Sigmoid colon (tissue), 7 donors: ENCODE measurements at regions of chr15 and their contacts with region 1.

Region 1: DNA sequence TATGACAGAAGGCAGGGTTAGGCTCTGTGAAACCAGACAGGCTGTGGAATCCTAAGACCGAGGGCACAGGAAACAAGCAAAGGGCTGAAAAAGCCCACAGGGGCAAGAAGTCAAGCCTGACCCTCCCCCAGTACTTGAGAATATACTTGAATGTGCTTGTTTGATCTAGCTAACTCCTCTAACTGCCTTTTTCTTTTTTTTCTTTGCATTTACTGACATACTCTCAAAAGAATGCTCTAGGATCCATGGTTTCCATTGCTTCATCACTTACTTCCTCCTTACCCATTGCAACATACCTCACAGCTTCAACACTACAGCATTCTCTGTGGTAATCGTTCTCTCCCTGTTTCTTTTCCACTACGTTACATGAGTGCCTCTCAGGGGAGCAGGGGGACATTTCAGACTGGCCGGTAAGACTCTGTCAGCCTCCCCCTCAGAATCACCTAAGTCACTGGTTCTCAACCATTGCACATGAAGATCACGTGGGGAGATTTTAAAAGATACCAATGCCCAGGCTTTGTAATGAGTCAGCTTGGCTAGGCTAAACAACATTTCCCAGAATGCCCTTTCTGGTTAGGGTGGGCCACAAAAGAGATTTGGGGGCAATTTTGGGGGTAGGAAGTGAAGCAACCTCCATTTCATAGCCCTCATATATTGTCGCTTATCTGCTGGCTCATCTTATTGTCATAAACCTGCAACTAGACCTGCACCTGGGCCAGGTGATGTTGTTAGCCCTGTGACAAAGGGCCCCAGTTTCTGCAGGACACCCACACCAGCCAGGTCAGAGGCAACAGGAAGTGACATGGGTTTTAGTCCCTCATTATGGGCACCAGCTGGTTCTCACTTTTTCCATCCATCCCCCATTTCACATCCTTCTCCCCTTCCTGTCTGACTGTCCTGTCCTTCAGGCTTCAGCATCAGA is 24.6 kb upstream of the RSL24D1 start:
- DNase-seq: no peak
- H3K4me3 ChIP-seq: no peak overlapping the region
- H3K27ac ChIP-seq: peak overlapping the region in 3 of 4 donors; percentile 17 to 58 (median 42)
- H3K4me1 ChIP-seq: peaks cover 0 to 7% (median 5%) of the 10 kb centered on the region in 4 donors
- H3K27me3 ChIP-seq: no peaks in the 10 kb centered on the region
- CTCF ChIP-seq: no peak
- EP300 ChIP-seq: no peak
- POLR2A ChIP-seq: no peak

Region 2: GRCh38 chr15:55290528-55291057 is 69.2 kb after region 1 on chr15:
- intact Hi-C with region 1: loop called (anchors 1 kb)
- DNase-seq: peak; percentile 92
- H3K4me3 ChIP-seq: peak overlapping the region; percentile 78 to 85 (median 80)
- H3K27ac ChIP-seq: peak overlapping the region; percentile 91 to 95 (median 92)
- H3K4me1 ChIP-seq: peaks cover 0 to 15% (median 6%) of the 10 kb centered on the region in 4 donors
- H3K27me3 ChIP-seq: no peaks in the 10 kb centered on the region
- CTCF ChIP-seq: peak; percentile 67 to 85 (median 78)
- EP300 ChIP-seq: no peak
- POLR2A ChIP-seq: no peak